ENCODE measurements at regions of chr1 and their contacts with region 1.

Region 1: GRCh38 chr1:116881879-116882520 is 27.7 kb upstream of the PTGFRN start:
- DNase-seq: peak; percentile 26
- H3K4me3 ChIP-seq: no peak overlapping the region
- H3K27ac ChIP-seq: no peak overlapping the region
- H3K4me1 ChIP-seq: peaks cover 26% of the 10 kb centered on the region
- H3K27me3 ChIP-seq: no peaks in the 10 kb centered on the region
- CTCF ChIP-seq: peak; percentile 12 to 27
- POLR2A ChIP-seq: no peak

Region 2: GRCh38 chr1:115840605-115841460 is 1041.2 kb before region 1 on chr1 and contains the start of gene NHLH2:
- CTCF ChIA-PET with region 1: no interaction called
- POLR2A ChIA-PET with region 1: no interaction called
- dilution Hi-C with region 1: no loop called
- intact Hi-C with region 1: no loop called
- DNase-seq: no peak
- H3K4me3 ChIP-seq: no peak within 1 kb of the TSS
- H3K27ac ChIP-seq: no peak within 1 kb of the TSS
- H3K4me1 ChIP-seq: peaks cover 6% of the 10 kb centered on the region
- H3K27me3 ChIP-seq: peaks cover 50 to 84% of the 10 kb centered on the region in 2 experiments
- CTCF ChIP-seq: no peak
- POLR2A ChIP-seq: no peak
- total RNA-seq, gene NHLH2: not detected in 2 replicates

Region 3: DNA sequence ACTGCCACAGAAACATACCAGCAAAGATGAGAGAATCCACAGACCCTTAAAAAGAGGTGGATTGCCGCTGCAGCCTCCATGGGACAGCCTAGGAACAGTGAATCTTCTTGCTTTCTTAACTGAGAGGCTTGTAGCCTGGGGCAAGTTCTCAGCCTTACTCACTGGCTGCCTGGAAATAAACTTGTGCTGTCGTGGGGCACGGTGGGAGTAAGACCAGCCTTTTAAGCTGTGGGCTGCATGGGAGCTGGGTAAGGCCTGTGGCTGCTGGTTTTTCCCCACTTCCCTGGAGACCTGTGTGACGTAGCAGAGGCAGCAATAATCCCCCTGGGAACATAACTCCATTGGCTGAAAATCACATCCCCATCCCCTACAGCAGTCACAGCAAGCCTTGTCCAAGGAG is 97.0 kb before region 1 on chr1:
- CTCF ChIA-PET with region 1: no interaction called
- POLR2A ChIA-PET with region 1: no interaction called
- dilution Hi-C with region 1: no loop called
- intact Hi-C with region 1: no loop called
- DNase-seq: no peak
- H3K4me3 ChIP-seq: no peak overlapping the region
- H3K27ac ChIP-seq: no peak overlapping the region
- H3K4me1 ChIP-seq: no peaks in the 10 kb centered on the region
- H3K27me3 ChIP-seq: no peaks in the 10 kb centered on the region
- CTCF ChIP-seq: no peak
- POLR2A ChIP-seq: no peak

Region 4: GRCh38 chr1:116842654-116843053 is 39.3 kb before region 1 on chr1:
- CTCF ChIA-PET with region 1: interaction called, 12 read pairs
- POLR2A ChIA-PET with region 1: no interaction called
- dilution Hi-C with region 1: no loop called
- intact Hi-C with region 1: no loop called
- DNase-seq: peak; percentile 20
- H3K4me3 ChIP-seq: no peak overlapping the region
- H3K27ac ChIP-seq: no peak overlapping the region
- H3K4me1 ChIP-seq: peaks cover 2% of the 10 kb centered on the region
- H3K27me3 ChIP-seq: no peaks in the 10 kb centered on the region
- CTCF ChIP-seq: no peak
- POLR2A ChIP-seq: no peak

Region 5: DNA sequence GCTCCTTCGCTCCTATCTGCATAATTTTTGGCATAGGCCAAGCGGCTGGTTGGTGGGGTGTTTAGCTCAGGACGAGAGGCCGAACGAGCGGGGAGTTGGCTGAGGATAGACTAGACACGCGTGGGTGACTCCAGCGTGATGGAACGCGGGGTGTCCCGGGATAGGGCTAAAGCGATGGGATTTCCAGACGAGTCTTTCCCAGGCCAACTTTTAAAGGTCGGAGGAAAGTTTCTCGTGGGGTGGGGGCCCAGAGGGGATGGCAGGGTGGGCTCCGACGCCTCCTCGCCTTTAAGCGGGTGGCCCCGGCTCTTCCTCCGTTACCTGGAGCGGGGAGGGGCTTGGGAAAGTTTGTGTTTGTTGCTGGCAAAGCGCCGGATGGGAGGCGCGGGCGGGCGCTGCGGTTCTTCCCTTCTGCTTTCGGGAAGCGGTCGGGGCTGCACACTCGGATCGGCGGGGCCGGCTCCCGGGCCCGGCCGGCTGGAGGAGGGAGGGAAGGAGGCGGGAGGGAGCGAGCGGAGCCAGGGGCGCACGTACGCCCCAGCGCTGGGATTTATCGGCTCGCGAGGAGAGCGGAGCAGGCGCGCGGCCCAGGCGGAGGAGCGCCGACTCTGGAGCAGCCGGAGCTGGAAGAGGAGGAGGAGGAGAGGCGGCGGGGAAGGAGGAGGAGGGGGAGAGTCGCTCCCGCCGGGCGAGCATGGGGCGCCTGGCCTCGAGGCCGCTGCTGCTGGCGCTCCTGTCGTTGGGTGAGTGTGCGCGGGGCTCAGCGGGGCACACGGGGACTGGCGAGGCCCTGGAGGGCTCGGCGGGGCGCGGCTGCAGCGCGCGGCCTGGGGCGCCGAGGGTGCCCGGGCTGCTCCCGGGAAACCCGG is 27.7 kb after region 1 on chr1 and contains the start of gene PTGFRN:
- CTCF ChIA-PET with region 1: interaction called, 5 read pairs
- POLR2A ChIA-PET with region 1: no interaction called
- dilution Hi-C with region 1: no loop called
- intact Hi-C with region 1: loop called (anchors 1 kb)
- DNase-seq: peak; percentile 62
- H3K4me3 ChIP-seq: peak within 1 kb of the TSS; percentile 51 to 62 (median 56)
- H3K27ac ChIP-seq: peak within 1 kb of the TSS; percentile 3
- H3K4me1 ChIP-seq: no peaks in the 10 kb centered on the region
- H3K27me3 ChIP-seq: no peaks in the 10 kb centered on the region
- CTCF ChIP-seq: no peak
- POLR2A ChIP-seq: no peak
- total RNA-seq, gene PTGFRN: 60.7 and 71.6 TPM in 2 replicates

Measured in endothelial cell of umbilical vein (primary cell).